Endothelial cell of umbilical vein (primary cell): ENCODE measurements at regions of chr5 and their contacts with region 1.

Region 1: DNA sequence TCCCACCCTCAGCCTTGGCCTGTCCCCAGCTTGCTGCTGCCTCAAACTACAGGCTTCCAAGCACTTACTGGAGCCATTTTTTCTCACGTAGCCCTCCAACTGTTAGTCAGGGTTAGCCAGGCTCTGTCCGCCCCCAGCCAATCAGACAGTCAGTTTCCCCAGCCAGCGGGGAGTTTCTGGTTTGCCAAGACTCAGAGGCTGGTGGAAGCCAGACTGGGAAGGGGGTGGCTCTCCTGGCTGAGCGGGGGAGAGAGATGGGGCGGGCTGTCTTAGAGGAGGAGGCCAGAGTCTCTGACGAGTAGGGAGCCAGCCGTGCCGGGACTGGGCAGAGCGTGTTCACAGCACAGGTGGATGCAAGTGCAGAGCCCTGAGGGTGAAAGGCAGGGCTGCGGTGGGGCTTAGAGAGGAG is 15.3 kb downstream of the PROP1 start:
- DNase-seq: no peak
- H3K4me3 ChIP-seq: no peak overlapping the region
- H3K27ac ChIP-seq: no peak overlapping the region
- H3K4me1 ChIP-seq: no peaks in the 10 kb centered on the region
- H3K27me3 ChIP-seq: peaks cover 17 to 24% of the 10 kb centered on the region in 2 experiments
- CTCF ChIP-seq: no peak
- POLR2A ChIP-seq: no peak

Region 2: GRCh38 chr5:176941951-176942350 is 1038.8 kb before region 1 on chr5:
- CTCF ChIA-PET with region 1: no interaction called
- POLR2A ChIA-PET with region 1: interaction called, 15 read pairs
- dilution Hi-C with region 1: no loop called
- intact Hi-C with region 1: no loop called
- DNase-seq: no peak
- H3K4me3 ChIP-seq: no peak overlapping the region
- H3K27ac ChIP-seq: no peak overlapping the region
- H3K4me1 ChIP-seq: no peaks in the 10 kb centered on the region
- H3K27me3 ChIP-seq: no peaks in the 10 kb centered on the region
- CTCF ChIP-seq: no peak
- POLR2A ChIP-seq: no peak

Region 3: DNA sequence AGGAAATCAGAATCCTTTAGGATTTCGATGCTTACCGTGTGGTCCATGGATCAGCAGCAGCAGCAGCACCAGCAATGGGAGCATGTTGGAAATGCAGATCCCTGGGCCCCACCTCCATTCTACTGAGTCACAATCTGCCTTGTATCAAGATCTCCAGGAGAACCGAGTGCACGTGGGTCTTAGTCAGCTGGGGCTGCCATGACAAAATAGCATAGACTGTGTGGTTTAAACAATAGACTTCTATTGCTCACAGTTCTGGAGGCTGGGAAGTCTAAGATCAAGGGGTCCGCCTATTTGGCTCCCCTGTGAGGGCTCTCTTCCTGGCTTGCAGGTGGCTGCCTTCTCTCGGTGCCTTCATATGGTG is 16.5 kb after region 1 on chr5:
- CTCF ChIA-PET with region 1: no interaction called
- POLR2A ChIA-PET with region 1: no interaction called
- dilution Hi-C with region 1: no loop called
- intact Hi-C with region 1: no loop called
- DNase-seq: no peak
- H3K4me3 ChIP-seq: no peak overlapping the region
- H3K27ac ChIP-seq: no peak overlapping the region
- H3K4me1 ChIP-seq: no peaks in the 10 kb centered on the region
- H3K27me3 ChIP-seq: peaks cover 0 to 2% of the 10 kb centered on the region in 2 experiments
- CTCF ChIP-seq: no peak
- POLR2A ChIP-seq: no peak